ENCODE measurements at regions of chr1 and their contacts with region 1.

Region 1: DNA sequence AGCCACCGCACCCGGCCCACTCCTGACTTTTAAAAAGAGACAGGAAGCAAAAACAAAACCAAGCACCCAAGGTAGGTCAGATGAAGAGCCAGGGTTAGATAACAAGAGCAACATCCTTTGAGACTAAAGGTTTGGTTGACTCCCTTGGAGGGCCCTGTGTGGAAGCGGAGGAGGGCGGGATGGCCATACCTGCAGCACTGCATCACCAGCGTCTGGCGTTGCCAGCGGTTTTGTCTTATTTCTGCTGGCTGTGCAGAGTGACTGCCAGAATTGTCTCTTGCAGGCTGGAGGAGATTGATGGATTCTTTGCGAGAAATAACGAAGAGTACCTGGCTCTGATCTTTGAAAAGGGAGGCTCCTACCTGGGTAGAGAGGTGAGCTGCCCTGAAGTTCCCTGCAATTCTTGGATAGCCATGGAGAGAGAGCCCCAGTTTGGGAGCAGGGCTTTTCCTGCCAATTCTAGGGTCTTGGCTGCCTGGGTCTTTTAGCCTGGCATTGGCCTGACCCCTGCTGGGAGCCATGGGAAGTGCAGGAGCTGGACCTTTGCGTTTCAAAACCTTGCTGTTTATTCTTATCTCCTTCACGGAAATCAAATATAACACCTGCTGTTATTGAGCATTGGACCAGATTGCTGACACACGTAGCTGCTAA is 24.0 kb downstream of the QSOX1 start:
- DNase-seq: no peak
- H3K4me3 ChIP-seq: no peak overlapping the region
- H3K27ac ChIP-seq: no peak overlapping the region
- H3K4me1 ChIP-seq: peaks cover 0 to 7% of the 10 kb centered on the region in 2 donors
- H3K27me3 ChIP-seq: no peaks in the 10 kb centered on the region
- CTCF ChIP-seq: peak; percentile 85 to 96 (median 95)

Region 2: GRCh38 chr1:179856296-179856695 is 322.3 kb before region 1 on chr1:
- intact Hi-C with region 1: no loop called
- DNase-seq: no peak
- H3K4me3 ChIP-seq: no peak overlapping the region
- H3K27ac ChIP-seq: no peak overlapping the region
- H3K4me1 ChIP-seq: no peaks in the 10 kb centered on the region
- H3K27me3 ChIP-seq: no peaks in the 10 kb centered on the region
- CTCF ChIP-seq: no peak

Region 3: DNA sequence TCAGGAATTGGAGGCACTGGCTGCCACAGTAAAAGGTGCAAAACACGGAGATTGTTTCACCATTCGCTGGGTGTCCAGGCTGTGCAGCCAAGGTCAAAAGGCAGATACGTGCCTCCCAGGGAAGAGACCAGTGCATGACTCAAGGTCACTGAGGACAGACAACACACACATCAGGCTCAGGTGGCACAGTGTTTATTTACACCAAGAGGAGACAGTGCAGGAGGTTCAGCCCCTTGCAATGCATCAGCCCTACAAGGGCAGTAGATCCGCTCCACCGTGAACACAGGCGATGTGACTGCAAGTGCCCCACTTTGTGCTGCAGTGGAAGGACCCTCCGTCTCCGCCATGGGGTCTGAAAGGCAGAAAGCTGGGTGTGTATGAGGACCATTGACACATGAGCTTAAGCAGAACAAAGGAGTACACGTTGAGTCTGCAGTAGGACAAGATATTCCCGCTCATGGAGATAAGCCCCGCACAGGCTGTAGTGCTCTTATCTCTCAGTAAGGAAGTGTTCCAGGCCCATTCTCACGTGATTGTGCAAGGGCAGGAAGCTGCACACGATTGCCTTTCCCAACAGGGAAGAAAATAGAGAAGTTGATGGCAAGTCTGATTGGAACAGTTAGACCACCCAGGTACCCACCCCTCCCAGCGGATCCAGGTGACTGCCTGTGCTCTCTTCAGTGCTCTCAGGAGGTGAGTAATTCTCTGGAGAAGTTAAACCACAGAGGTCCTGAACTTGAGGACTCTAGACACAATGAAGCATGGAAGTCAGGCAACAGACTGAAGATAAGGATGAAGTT is 61.5 kb before region 1 on chr1:
- intact Hi-C with region 1: loop called (anchors 5 kb)
- DNase-seq: no peak
- H3K4me3 ChIP-seq: no peak overlapping the region
- H3K27ac ChIP-seq: no peak overlapping the region
- H3K4me1 ChIP-seq: no peaks in the 10 kb centered on the region
- H3K27me3 ChIP-seq: no peaks in the 10 kb centered on the region
- CTCF ChIP-seq: no peak

Measured in ascending aorta (tissue), 2 donors.